ENCODE measurements at regions of chr16 and their contacts with region 1.

Region 1: DNA sequence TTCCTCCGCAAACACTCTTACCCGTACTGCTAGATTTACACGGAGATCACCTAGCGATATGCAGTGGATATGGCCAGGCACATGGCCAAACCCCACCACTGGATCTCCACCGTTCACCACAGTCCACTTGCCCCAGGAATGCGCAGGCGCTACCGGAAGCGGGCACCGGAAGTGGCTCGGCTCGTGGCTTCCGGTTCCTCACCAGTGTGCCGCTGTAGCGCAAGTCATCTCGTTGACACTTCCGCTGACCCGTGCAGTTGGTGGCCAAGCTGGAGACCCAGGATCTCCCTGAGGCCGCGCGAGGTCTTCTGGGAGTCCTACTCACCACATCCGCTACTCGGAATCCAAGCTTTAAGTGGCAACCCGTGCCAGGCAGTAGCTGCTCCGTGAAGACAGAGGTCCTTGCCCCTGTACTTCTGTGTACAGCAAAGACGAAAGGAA is 11.5 kb downstream of the ZNF597 start:
- DNase-seq: peak; percentile 43
- ATAC-seq: no peak
- H3K4me3 ChIP-seq: peak overlapping the region; percentile 5 to 56 (median 33)
- H3K4me3 Mint-ChIP-seq: peak overlapping the region; percentile 67
- H3K27ac ChIP-seq: no peak overlapping the region
- H3K27ac Mint-ChIP-seq: peak overlapping the region; percentile 67
- H3K4me1 ChIP-seq: no peaks in the 10 kb centered on the region
- H3K4me1 Mint-ChIP-seq: peaks cover 3% of the 10 kb centered on the region
- H3K27me3 ChIP-seq: peaks cover 0 to 6% (median 0%) of the 10 kb centered on the region in 4 experiments
- H3K27me3 Mint-ChIP-seq: peaks cover 15% of the 10 kb centered on the region
- CTCF ChIP-seq: no peak

Region 2: DNA sequence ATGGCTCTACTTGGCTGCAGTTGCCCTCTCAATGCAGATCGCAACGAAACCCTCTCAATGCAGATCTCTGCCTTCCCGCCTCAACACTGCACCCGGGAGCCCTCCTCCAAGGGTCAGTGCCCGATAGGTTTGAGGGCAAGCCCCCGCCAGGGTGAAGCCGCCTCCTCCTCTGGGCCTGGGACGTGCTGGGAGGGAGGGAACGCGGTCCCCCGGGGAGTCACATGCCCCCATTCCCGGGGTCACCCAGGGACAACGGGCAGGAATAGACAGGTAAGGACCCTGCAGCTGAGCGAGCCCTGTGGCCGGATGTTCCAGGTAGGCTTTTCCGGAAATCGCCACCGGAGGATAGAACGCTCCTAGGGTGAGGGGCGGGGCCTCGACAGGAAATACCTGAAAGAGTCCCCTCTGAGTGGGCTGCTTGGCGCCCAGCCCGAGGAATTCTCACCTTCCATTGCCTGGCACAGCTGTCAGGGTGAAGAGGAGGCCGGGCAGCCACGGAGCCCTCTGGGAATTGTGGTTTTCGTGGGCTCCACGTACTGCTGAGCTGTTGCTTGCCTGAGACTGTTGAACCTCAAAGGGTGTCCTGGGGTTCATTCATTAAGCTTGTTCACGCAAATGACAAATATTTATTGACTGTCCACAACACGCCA is 17.9 kb before region 1 on chr16:
- CTCF ChIA-PET with region 1: no interaction called
- POLR2A ChIA-PET with region 1: no interaction called
- intact Hi-C with region 1: no loop called
- DNase-seq: no peak
- ATAC-seq: no peak
- H3K4me3 ChIP-seq: no peak overlapping the region
- H3K4me3 Mint-ChIP-seq: no peak overlapping the region
- H3K27ac ChIP-seq: no peak overlapping the region
- H3K27ac Mint-ChIP-seq: no peak overlapping the region
- H3K4me1 ChIP-seq: no peaks in the 10 kb centered on the region
- H3K4me1 Mint-ChIP-seq: no peaks in the 10 kb centered on the region
- H3K27me3 ChIP-seq: peaks cover 0 to 9% (median 0%) of the 10 kb centered on the region in 4 experiments
- H3K27me3 Mint-ChIP-seq: peaks cover 3% of the 10 kb centered on the region
- CTCF ChIP-seq: no peak

Region 3: GRCh38 chr16:3553138-3553923 is 121.5 kb after region 1 on chr16:
- CTCF ChIA-PET with region 1: no interaction called
- POLR2A ChIA-PET with region 1: no interaction called
- intact Hi-C with region 1: no loop called
- DNase-seq: no peak
- ATAC-seq: no peak
- H3K4me3 ChIP-seq: no peak overlapping the region
- H3K4me3 Mint-ChIP-seq: no peak overlapping the region
- H3K27ac ChIP-seq: no peak overlapping the region
- H3K27ac Mint-ChIP-seq: no peak overlapping the region
- H3K4me1 ChIP-seq: peaks cover 15 to 32% of the 10 kb centered on the region in 2 donors
- H3K4me1 Mint-ChIP-seq: peaks cover 25% of the 10 kb centered on the region
- H3K27me3 ChIP-seq: no peaks in the 10 kb centered on the region
- H3K27me3 Mint-ChIP-seq: no peaks in the 10 kb centered on the region
- CTCF ChIP-seq: no peak

Region 4: GRCh38 chr16:3577302-3577752 is 145.5 kb after region 1 on chr16 and contains the start of gene NLRC3:
- CTCF ChIA-PET with region 1: no interaction called
- POLR2A ChIA-PET with region 1: interaction called, 10 read pairs
- intact Hi-C with region 1: no loop called
- DNase-seq: peak; percentile 54
- ATAC-seq: peak; percentile 23
- H3K4me3 ChIP-seq: peak within 1 kb of the TSS; percentile 63 to 93 (median 79)
- H3K4me3 Mint-ChIP-seq: peak within 1 kb of the TSS; percentile 96
- H3K27ac ChIP-seq: peak within 1 kb of the TSS; percentile 71 to 89
- H3K27ac Mint-ChIP-seq: peak within 1 kb of the TSS; percentile 97
- H3K4me1 ChIP-seq: peaks cover 45 to 57% of the 10 kb centered on the region in 2 donors
- H3K4me1 Mint-ChIP-seq: peaks cover 59% of the 10 kb centered on the region
- H3K27me3 ChIP-seq: no peaks in the 10 kb centered on the region
- H3K27me3 Mint-ChIP-seq: no peaks in the 10 kb centered on the region
- CTCF ChIP-seq: no peak
- total RNA-seq, gene NLRC3: 35.7 and 39.6 TPM in 2 replicates